ENCODE measurements at regions of chr1 and their contacts with region 1.

Region 1: DNA sequence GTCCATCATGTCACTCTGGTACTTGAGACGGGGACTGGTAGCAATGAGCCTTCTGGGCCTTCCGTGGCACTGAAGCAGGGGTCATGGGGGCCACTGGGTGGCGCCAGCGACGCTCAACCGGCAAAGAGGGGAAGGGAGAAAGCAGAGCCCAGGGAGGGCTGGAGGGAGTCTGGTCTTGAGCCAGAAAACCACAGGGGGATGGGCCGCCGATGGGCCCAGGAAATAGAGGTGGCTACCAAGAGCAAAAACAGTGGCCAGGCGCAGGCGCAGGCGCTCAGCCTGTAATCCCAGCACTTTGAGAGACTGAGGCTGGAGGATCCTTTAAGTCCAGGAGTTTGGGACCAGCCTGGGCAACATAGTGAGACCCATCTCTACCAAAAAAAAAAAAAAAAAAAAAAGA is 21.8 kb downstream of the EXOC8 start:
- DNase-seq: peak; percentile 66
- H3K4me3 Mint-ChIP-seq: no peak overlapping the region
- H3K27ac Mint-ChIP-seq: no peak overlapping the region
- H3K4me1 Mint-ChIP-seq: no peaks in the 10 kb centered on the region
- H3K27me3 Mint-ChIP-seq: peaks cover 10% of the 10 kb centered on the region

Region 2: DNA sequence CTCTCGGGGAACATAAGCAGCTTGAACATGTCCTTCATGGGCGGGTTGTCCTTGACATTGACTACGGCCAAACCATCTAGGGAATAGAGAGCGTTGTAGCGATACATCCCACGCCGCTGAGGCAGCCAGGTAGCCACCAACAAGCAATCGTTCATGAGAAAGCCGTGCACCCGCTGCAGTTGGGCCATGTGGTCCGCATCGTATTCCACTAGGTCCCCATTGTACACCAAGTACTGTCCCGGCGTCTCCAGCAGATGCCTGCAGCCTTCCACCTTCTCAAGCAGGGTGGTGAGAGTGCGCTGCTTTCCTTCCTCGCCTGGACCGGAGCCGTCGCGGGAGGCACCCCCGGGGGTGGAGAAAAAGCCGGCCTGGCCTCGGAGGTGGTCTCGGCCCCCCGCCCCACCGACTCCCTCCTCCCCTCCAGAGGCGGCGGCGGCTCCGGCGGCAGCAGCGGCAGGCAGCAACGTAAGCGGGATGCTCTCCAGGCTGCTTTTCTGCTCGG is 21.1 kb after region 1 on chr1:
- CTCF ChIA-PET with region 1: interaction called, 10 read pairs
- DNase-seq: no peak
- H3K4me3 Mint-ChIP-seq: peak overlapping the region; percentile 98
- H3K27ac Mint-ChIP-seq: peak overlapping the region; percentile 98
- H3K4me1 Mint-ChIP-seq: peaks cover 61% of the 10 kb centered on the region
- H3K27me3 Mint-ChIP-seq: peaks cover 6% of the 10 kb centered on the region

Region 3: DNA sequence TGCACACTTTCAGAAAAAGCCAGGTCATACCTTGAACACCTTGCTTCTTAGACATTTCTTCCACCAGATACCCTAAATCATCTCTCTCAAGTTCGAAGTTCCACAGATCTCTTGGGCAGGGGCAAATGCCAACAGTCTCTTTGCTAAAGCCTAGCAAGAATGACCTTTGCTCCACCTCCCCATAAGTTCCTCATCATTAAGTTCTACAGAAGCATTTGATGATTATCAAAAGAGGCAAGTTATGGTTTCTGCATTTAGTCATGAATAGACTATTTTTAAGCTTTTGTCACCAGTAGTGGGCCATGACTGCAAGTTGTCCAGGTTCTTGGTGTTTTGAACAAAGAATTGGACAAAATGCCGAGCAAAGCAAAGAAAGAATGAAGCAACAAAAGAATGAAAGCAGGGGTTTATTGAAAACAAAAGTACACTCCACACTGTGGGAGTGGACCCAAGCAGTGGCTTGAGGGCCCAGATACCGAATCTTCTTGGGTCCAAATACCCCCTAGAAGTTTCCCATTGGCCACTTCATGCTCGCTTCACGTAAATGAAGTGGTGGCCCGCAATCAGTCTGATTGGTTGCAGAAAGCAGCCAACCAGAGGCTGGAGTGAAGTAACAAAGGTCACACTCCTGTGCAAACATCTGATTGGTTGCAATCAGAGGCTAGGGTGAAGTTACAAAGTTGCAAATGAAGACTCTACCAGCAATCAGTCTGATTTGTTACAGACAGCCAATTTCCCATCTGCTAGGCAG is 116.0 kb after region 1 on chr1:
- CTCF ChIA-PET with region 1: no interaction called
- DNase-seq: no peak
- H3K4me3 Mint-ChIP-seq: no peak overlapping the region
- H3K27ac Mint-ChIP-seq: no peak overlapping the region
- H3K4me1 Mint-ChIP-seq: no peaks in the 10 kb centered on the region
- H3K27me3 Mint-ChIP-seq: peaks cover 39% of the 10 kb centered on the region

Measured in activated naive CD4-positive, alpha-beta T cell treated with anti-CD3 and anti-CD28 coated beads, Interleukin-2, amount 10 ng/mL, durations not matched to agents 7 days and 5 days (primary cell).